Activated naive CD8-positive, alpha-beta T cell treated with anti-CD3 and anti-CD28 coated beads, Interleukin-2, amount 10 ng/mL, durations not matched to agents 7 days and 5 days (primary cell): ENCODE measurements at regions of chr16 and their contacts with region 1.

Region 1: DNA sequence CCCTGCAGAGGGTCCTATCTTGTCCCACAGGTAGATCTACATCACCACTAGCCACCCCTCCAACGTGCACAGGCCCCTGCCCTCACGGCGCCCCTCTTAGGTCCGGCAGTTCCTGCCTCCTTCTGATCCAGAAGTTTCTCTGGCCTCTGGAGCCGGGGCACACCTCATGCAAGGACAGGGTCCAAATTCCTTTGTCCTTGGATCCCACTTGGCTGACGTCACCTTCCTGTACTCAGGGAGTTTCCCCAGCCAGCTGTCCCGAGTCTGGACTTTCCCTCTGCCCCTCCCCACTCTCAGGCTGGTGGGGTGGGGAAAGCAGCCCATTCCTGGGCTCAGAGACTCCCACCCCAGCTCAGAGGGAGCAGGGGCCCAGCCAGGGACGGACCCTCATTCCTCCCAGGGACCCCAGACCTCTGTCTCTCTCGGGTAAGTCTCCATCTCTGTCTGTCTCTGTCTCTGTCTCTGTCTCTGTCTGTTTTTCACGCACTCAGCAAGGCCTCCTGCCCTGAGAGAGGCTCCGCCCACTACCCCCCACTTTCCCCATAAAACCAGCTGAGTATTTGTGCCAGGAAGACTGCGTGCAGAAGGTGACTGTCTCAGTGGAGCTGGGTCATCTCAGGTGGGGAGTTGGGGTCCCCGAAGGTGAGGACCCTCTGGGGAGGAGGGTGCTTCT is at the start of gene IL32:
- DNase-seq: peak; percentile 77
- ATAC-seq: peak; percentile 59
- H3K4me3 Mint-ChIP-seq: peak within 1 kb of the TSS; percentile 98
- H3K27ac Mint-ChIP-seq: peak within 1 kb of the TSS; percentile 98
- H3K4me1 Mint-ChIP-seq: peaks cover 46% of the 10 kb centered on the region
- H3K27me3 Mint-ChIP-seq: no peaks in the 10 kb centered on the region
- total RNA-seq, gene IL32: 2,319 to 2,425 TPM

Region 2: DNA sequence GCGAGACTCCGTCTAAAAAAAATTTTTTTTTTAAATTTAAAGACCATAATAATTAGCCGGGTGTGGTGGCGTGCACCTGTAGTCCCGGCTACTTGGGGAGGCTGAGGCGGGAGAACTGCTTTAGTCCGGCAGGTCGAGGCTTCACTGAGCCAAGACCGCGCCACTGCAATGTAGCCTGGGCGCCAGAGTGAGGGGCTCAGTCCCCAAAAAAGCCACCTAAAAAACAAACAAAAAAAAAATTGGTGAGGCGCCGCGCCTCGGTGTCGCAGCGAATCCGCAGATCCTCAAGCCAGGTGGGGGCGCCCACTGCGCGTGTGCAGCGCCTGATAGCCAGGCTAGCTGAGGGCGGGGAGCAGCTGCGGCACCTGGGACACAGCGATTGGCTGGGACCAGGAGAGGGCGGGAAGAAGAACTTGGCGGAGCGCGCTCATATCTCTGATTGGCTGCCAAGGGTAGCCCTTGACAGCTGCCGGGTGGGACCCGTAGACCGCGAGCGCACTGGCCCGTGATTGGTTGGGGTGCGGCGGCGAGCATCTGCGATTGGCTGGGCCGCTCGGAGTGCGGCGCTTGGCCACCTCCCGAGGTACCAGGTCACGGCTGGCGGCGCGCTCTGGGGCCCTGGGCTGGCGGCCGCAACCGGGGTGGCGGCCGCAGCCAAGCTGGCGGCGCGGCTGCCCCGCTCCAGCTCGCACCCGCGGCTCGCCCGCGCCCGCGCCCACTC is 61.5 kb before region 1 on chr16:
- POLR2A ChIA-PET with region 1: no interaction called
- DNase-seq: peak; percentile 93
- ATAC-seq: peak; percentile 99
- H3K4me3 Mint-ChIP-seq: peak overlapping the region; percentile 64
- H3K27ac Mint-ChIP-seq: no peak overlapping the region
- H3K4me1 Mint-ChIP-seq: peaks cover 19% of the 10 kb centered on the region
- H3K27me3 Mint-ChIP-seq: peaks cover 32% of the 10 kb centered on the region

Region 3: GRCh38 chr16:3087243-3088235 is 22.3 kb after region 1 on chr16:
- POLR2A ChIA-PET with region 1: interaction called, 15 read pairs
- DNase-seq: no peak
- ATAC-seq: no peak
- H3K4me3 Mint-ChIP-seq: no peak overlapping the region
- H3K27ac Mint-ChIP-seq: peak overlapping the region; percentile 54
- H3K4me1 Mint-ChIP-seq: peaks cover 34% of the 10 kb centered on the region
- H3K27me3 Mint-ChIP-seq: no peaks in the 10 kb centered on the region

Region 4: GRCh38 chr16:3099732-3100499 is 34.7 kb after region 1 on chr16:
- POLR2A ChIA-PET with region 1: interaction called, 13 read pairs
- DNase-seq: peak; percentile 94
- ATAC-seq: peak; percentile 82
- H3K4me3 Mint-ChIP-seq: peak overlapping the region; percentile 89
- H3K27ac Mint-ChIP-seq: peak overlapping the region; percentile 90
- H3K4me1 Mint-ChIP-seq: peaks cover 29% of the 10 kb centered on the region
- H3K27me3 Mint-ChIP-seq: peaks cover 2% of the 10 kb centered on the region

Region 5: DNA sequence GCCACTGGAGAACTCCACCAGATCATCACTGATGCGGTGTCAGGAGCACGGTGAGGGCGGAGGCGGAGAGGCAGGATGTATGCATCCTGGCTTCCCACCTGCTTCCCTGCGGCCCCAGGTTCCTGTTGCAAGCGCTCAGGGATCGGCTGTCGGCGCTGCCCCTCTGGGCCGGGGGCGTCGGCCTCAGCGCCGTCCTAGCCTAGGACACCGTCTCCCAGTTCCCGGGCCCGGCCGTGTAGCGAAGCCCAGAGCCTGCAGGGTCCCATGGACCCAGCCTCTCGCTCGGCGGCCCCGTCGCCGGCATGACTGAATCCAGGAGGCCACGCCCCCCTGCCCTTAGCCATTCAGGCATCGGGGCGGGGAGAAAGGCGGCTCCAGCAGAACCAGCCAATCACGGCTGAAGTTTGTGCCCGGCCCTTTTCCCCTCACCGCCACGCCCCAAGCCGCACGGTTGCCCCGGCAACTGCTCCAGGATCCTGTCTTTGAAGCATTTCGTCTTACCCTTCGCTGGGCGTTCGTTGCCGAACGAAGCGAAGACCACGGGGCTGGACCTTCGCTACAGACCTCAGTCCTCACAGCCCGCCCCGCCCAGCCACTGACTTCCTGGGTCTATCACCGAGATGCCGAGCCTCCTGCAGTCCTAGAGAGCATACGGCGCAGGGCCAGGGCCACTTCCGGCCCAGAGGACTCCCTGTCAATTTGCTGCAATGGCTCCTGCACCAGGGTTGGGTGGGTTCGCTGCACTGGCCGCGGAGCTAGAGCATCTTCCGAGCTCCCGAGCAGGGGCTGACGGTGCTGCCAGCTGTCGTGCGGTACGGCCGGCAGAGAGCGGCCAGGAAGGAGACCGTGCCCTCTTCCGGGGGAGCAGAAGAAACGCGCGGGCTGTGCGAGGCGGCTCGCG is 59.0 kb after region 1 on chr16:
- POLR2A ChIA-PET with region 1: interaction called, 121 read pairs
- DNase-seq: peak; percentile 98
- ATAC-seq: peak; percentile 86
- H3K4me3 Mint-ChIP-seq: peak overlapping the region; percentile 97
- H3K27ac Mint-ChIP-seq: peak overlapping the region; percentile 98
- H3K4me1 Mint-ChIP-seq: peaks cover 28% of the 10 kb centered on the region
- H3K27me3 Mint-ChIP-seq: no peaks in the 10 kb centered on the region